T-cell (primary cell): ENCODE measurements at regions of chr3 and their contacts with region 1.

Region 1: DNA sequence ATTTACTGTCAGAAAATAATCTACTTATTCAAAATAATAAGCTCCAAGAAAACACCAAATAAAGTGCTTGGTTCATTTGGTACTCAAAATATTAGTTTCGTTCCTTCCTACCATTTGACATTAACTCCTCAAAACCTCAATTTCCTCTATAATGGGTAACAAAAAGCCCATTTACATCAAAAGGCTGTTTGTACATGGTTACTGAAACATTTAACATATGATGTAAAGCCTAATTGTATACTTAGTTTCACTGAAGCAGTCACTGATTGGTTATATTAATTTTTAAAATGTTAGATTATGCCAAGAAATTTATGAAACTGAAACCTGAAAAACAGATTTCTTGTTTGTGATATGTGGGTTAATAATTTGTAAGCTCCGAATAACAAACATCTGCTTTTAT is 14.7 kb downstream of the XRN1 start:
- DNase-seq: no peak
- ATAC-seq: no peak
- H3K4me3 ChIP-seq: no peak overlapping the region
- H3K4me3 Mint-ChIP-seq: no peak overlapping the region
- H3K27ac ChIP-seq: no peak overlapping the region
- H3K27ac Mint-ChIP-seq: no peak overlapping the region
- H3K4me1 ChIP-seq: peaks cover 0 to 2% of the 10 kb centered on the region in 2 experiments
- H3K4me1 Mint-ChIP-seq: peaks cover 27 to 39% (median 30%) of the 10 kb centered on the region in 3 donors
- H3K27me3 ChIP-seq: no peaks in the 10 kb centered on the region
- H3K27me3 Mint-ChIP-seq: no peaks in the 10 kb centered on the region

Region 2: GRCh38 chr3:142394921-142395622 is 38.0 kb before region 1 on chr3:
- CTCF ChIA-PET with region 1: no interaction called
- POLR2A ChIA-PET with region 1: interaction called in 1 of 2 experiments, 10 read pairs
- DNase-seq: no peak
- ATAC-seq: no peak
- H3K4me3 ChIP-seq: no peak overlapping the region
- H3K4me3 Mint-ChIP-seq: no peak overlapping the region
- H3K27ac ChIP-seq: no peak overlapping the region
- H3K27ac Mint-ChIP-seq: no peak overlapping the region
- H3K4me1 ChIP-seq: no peaks in the 10 kb centered on the region
- H3K4me1 Mint-ChIP-seq: no peaks in the 10 kb centered on the region
- H3K27me3 ChIP-seq: no peaks in the 10 kb centered on the region
- H3K27me3 Mint-ChIP-seq: no peaks in the 10 kb centered on the region

Region 3: DNA sequence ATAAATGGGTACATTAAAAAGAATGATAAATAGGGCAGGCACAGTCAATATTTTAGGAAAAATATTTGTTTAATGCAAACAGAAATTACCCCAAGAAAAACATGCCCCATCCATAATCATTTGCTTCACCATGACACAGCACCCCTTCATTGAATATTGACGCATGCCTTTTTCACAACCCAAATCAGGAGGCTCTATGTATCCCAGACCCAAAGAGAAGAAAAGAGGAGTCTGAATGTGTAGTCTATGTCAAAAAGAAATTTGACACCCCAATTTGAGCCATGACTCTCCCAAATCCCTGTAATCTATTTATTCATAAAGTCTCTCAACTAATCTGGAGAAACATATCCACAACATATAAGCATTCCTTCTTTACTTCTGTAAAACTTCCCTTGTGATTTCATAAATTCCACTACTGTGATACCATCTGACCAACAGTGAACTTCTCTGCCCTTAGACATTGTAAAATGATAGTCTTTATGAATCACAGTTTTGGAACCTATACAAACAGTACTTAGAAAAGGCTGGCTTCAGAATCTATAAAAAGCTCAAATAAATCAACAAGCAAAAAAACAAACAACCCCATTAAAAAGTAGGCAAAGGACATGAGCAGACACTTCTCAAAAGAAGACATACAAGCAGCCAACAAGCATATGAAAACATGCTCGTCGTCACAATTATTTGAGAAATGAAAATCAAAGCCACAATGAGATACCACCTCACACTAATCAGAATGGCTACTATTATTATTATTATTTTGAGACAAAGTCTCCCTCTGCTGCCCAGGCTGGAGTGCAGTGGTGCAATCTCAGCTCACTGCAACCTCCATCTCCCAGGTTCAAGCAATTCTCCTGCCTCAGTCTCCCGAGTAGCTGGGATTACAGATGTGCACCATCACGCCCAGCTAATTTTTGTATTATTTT is 68.2 kb after region 1 on chr3:
- CTCF ChIA-PET with region 1: no interaction called
- POLR2A ChIA-PET with region 1: interaction called in 1 of 2 experiments, 14 read pairs
- DNase-seq: no peak
- ATAC-seq: no peak
- H3K4me3 ChIP-seq: no peak overlapping the region
- H3K4me3 Mint-ChIP-seq: no peak overlapping the region
- H3K27ac ChIP-seq: no peak overlapping the region
- H3K27ac Mint-ChIP-seq: peak overlapping the region in 1 of 2 donors; percentile 11
- H3K4me1 ChIP-seq: no peaks in the 10 kb centered on the region
- H3K4me1 Mint-ChIP-seq: no peaks in the 10 kb centered on the region
- H3K27me3 ChIP-seq: no peaks in the 10 kb centered on the region
- H3K27me3 Mint-ChIP-seq: no peaks in the 10 kb centered on the region